ENCODE measurements at regions of chr4 and their contacts with region 1.

Region 1: DNA sequence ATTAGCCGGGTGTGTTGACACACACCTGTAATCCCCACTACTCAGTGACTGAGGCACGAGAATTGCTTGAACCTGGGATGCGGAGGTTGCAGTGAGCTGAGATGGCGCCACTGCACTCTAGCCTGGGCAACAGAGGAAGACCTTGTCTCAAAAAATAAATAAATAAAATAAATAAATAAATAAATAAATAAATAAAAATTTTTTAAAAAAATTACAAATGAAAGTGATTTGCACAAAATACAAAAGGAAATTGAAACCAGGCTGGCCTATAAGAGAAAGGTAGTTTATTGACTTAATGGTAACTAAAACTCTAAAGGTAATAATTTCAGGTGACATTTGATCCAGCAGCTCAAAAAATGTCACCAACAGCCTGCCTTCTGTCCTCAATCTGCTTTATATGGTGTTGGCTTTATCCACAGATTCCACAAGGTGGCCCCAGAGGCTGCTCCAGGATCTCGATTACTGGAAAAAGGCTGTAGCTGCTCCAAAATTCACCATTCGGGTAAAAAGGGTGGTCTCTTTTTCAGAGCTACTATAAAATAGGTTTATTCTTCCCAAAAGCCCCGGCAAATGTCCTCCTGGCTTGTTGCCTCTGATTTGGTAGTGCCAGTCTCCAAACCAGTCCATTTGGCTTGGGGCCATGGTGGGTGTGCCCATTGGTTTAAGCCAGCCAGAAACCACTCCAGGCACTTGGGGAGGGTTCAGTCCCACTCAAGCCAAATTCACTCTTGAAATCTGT is 61.4 kb upstream of the TRIM2 start:
- DNase-seq: peak; percentile 80
- ATAC-seq: peak; percentile 77 to 88
- H3K4me3 ChIP-seq: peak overlapping the region; percentile 22
- H3K27ac ChIP-seq: no peak overlapping the region
- H3K4me1 ChIP-seq: peaks cover 11% of the 10 kb centered on the region
- H3K27me3 ChIP-seq: no peaks in the 10 kb centered on the region
- CTCF ChIP-seq: peak; percentile 81

Region 2: DNA sequence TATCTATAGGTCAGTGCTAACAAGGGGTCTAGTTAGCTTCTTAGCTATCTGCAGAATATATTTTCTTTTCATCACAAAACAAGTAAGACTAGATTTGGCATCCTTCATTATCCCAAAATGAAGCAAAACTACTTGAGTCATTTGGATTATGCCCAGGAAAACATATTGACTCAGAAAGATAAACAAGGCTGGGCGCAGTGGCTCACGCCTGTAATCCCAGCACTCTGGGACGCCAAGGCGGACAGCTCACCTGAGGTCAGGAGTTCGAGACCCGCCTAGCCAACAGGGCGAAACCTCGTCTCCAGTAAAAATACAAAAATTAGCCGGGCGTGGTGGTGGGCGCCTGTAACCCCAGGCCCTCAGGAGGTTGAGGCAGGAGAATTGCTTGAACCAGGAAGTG is 183.6 kb after region 1 on chr4:
- intact Hi-C with region 1: loop called (anchors 10 kb)
- DNase-seq: no peak
- ATAC-seq: no peak
- H3K4me3 ChIP-seq: no peak overlapping the region
- H3K27ac ChIP-seq: no peak overlapping the region
- H3K4me1 ChIP-seq: no peaks in the 10 kb centered on the region
- H3K27me3 ChIP-seq: no peaks in the 10 kb centered on the region
- CTCF ChIP-seq: no peak

Measured in lower lobe of right lung (tissue), 2 donors.